ENCODE measurements at regions of chr5 and their contacts with region 1.

Region 1: DNA sequence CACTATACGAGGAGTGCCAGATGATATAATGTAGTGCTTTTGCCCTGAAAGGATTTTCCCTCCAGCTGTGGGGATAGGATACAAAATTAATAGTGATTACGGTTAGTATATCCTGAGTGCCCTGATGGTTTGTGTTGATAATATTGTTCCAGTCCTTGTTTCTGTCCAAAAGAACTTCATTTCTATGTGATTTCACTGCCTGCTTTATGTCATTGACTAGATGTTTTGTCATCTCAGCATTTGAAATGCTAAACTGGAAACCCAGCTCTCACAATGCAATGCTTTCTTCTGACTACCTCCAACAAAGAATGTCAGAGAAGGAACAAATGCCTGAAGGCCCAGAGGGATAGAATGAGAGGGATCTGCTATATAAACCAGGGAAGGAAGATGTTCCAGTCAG is 177.8 kb downstream of the NIPBL start:
- DNase-seq: no peak
- ATAC-seq: no peak
- H3K4me3 ChIP-seq: no peak overlapping the region
- H3K27ac ChIP-seq: no peak overlapping the region
- H3K4me1 ChIP-seq: no peaks in the 10 kb centered on the region
- H3K27me3 ChIP-seq: no peaks in the 10 kb centered on the region
- CTCF ChIP-seq: no peak
- EP300 ChIP-seq: no peak
- POLR2A ChIP-seq: no peak
- RAD21 ChIP-seq: no peak

Region 2: DNA sequence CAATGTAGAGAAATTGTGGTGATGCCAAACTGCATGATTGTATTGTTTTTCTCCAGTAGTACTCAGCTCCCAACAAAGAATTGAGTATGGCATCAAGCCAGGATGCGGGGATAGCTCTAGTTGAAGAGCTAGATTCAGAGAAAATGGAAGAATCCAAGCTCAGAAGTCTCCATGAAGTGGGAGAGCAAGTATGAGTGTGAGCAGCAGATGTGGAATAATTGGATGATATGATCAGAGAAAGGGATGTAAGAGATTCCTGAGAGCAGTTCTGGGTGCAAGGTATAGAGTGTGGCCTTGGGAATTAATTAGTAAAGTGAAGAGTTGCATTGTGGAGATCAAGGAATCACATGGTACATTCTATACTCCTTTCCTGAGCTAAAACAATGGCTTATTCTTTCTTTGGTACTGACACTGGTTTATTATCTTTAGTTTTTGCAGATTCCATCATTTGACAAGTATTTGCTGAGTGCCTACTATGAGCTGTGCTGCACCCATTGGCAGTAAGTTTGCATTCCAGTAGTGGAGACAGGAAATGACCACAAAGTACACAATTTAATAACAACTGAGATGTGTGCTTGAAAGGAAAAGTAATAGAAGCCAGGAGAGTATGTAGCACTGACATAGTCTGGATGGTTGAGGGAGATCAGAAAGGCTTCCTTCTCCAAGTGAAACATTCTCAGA is 17.6 kb after region 1 on chr5:
- CTCF ChIA-PET with region 1: no interaction called
- POLR2A ChIA-PET with region 1: no interaction called
- RAD21 ChIA-PET with region 1: no interaction called
- SMC1A ChIA-PET with region 1: interaction called, 12 read pairs
- in situ Hi-C with region 1: no loop called
- intact Hi-C with region 1: no loop called
- DNase-seq: no peak
- ATAC-seq: no peak; the same call in 1 of the 3 replicates
- H3K4me3 ChIP-seq: no peak overlapping the region
- H3K27ac ChIP-seq: no peak overlapping the region
- H3K4me1 ChIP-seq: no peaks in the 10 kb centered on the region
- H3K27me3 ChIP-seq: no peaks in the 10 kb centered on the region
- CTCF ChIP-seq: no peak
- EP300 ChIP-seq: no peak
- POLR2A ChIP-seq: no peak
- RAD21 ChIP-seq: no peak